ENCODE measurements at regions of chr6 and their contacts with region 1.

Region 1: DNA sequence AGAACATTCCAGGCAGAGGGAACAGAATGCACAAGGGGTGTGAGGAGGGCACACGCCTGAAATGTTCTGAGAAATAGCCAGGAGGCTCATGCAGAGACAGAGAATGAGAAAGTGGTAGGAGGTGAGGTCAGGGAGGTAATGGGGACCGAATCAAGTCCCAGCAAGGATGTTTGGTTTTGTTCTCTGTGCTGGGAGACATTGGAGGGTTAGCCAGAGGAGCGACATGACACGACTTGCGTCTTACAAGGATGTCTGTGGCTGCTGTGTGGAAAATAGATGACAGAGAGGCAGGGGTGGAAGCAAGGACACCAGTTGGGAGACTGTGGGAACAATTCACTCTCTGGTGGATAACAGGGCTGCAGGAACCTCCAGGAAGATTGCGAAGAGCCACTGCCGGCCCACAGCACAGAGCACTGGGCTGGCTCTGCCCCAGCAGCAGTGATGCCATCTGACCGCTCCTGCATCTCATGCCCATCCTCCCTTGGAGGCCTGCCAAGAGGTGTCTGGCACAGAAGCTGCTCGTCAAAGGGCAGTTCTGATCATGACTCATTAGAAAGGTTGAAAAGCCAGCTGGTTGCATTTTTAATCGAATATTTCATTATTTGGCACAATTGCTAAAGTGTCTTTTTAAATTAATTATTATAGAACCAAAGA is 57.7 kb upstream of the CD83 start:
- DNase-seq: no peak
- H3K4me3 ChIP-seq: no peak overlapping the region
- H3K27ac ChIP-seq: no peak overlapping the region
- H3K4me1 ChIP-seq: no peaks in the 10 kb centered on the region
- H3K27me3 ChIP-seq: peaks cover 3% of the 10 kb centered on the region; the same call in 1 of the 2 replicates

Region 2: GRCh38 chr6:13807696-13808095 is 252.2 kb before region 1 on chr6:
- in situ Hi-C with region 1: no loop called
- DNase-seq: peak; percentile 20
- H3K4me3 ChIP-seq: no peak overlapping the region
- H3K27ac ChIP-seq: no peak overlapping the region
- H3K4me1 ChIP-seq: 0 out of 2 replicates have a peak, but pooled peaks cover 8% of the 10 kb centered on the region
- H3K27me3 ChIP-seq: no peaks in the 10 kb centered on the region

Region 3: DNA sequence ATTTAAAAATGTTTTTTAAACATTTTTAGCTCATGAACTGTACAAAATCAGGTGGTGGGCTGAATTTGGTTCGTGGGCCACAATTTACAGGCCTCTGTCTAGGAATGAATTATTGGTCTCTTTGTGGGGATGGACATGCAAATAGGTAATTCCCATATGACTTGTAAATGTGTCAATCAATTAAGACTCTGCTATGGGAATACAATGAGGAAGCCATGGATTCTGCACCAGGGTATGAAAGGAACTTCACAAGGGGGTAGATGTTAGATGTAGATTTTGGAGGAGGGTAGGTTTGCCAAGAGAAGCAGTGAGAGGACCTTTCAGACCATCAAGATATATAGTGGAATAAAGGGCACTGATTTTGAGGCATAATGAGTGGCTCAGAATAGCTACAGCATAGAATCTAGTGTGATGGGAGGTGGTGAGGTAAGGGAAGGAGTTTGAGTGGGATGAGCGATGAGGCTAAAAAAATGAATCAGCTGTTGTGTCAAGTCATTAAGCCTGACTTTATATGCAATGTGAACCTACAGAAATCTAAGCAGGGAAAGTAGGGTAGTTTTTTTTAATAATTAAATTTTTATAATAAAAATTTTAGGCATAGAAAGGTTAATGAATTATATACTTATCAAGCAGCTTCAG is 167.8 kb before region 1 on chr6:
- in situ Hi-C with region 1: no loop called
- DNase-seq: no peak
- H3K4me3 ChIP-seq: no peak overlapping the region
- H3K27ac ChIP-seq: no peak overlapping the region
- H3K4me1 ChIP-seq: no peaks in the 10 kb centered on the region
- H3K27me3 ChIP-seq: 0 out of 2 replicates have a peak, but pooled peaks cover 19% of the 10 kb centered on the region

Region 4: GRCh38 chr6:13903364-13903763 is 156.6 kb before region 1 on chr6:
- in situ Hi-C with region 1: loop called (anchors 5 kb)
- DNase-seq: no peak
- H3K4me3 ChIP-seq: no peak overlapping the region
- H3K27ac ChIP-seq: no peak overlapping the region
- H3K4me1 ChIP-seq: no peaks in the 10 kb centered on the region
- H3K27me3 ChIP-seq: peaks cover 43% of the 10 kb centered on the region

Region 5: DNA sequence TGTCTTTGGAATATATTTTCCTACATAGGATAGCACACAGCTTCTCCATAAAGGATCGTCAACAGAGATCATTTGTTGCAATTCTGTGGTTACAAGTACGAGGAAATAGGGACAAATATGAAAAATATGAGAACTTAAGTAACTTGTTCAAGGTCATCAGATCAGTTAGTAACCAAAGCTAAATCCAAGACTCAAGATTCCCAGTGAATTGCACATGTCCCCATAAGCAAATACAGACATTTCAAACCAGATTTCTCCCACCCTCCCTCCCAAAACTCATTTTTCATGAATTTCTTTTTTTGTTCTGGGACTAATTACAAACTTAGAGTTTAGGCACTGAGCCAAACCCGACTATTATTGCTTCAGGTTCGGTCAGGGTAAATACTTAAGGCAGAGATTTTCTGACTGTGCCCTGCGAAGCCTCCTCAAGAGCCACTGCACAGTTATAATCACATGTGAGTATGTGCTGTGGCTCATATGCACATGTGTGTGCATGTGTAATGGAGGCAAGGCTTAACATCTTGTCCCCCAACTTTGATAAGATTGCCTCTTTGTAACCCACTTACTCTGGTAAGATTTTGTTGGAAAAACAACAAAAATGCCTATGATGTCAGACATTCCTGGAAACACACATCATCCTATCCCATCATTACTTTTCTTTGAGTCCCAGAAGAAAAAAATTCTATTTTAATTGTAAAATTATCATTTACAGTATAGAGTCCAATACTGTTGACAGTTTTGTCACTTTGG is 273.8 kb after region 1 on chr6:
- in situ Hi-C with region 1: no loop called
- DNase-seq: peak; percentile 63
- H3K4me3 ChIP-seq: no peak overlapping the region
- H3K27ac ChIP-seq: peak overlapping the region; percentile 35
- H3K4me1 ChIP-seq: peaks cover 14% of the 10 kb centered on the region
- H3K27me3 ChIP-seq: no peaks in the 10 kb centered on the region